PC-3 (cell line): ENCODE measurements at regions of chr11 and their contacts with region 1.

Region 1: DNA sequence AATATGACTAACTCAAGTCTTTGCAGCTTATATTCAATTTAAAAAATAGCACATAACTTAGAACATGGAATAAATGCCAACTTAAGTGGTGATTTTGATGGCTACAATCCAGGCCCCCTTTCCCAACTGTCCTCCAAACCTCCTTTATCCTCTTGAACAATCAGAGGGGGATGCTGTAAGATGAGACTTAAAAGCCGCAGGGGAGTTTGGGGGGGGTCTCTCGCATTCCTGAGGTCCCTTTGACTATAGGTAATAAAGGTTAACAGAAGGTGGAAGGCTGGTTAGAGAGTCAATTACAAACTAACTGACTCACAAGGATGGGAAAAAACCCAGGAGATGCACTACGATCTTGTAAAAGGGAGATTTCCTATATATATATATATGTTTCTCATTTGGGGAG is 101.8 kb downstream of the KIRREL3 start:
- DNase-seq: no peak
- ATAC-seq: no peak
- H3K4me3 ChIP-seq: no peak overlapping the region
- H3K27ac ChIP-seq: no peak overlapping the region
- H3K4me1 ChIP-seq: no peaks in the 10 kb centered on the region
- H3K27me3 ChIP-seq: peaks cover 25% of the 10 kb centered on the region
- CTCF ChIP-seq: no peak

Region 2: GRCh38 chr11:126886636-126887035 is 12.2 kb before region 1 on chr11:
- CTCF ChIA-PET with region 1: no interaction called
- POLR2A ChIA-PET with region 1: interaction called, 10 read pairs
- intact Hi-C with region 1: no loop called
- DNase-seq: no peak
- ATAC-seq: no peak
- H3K4me3 ChIP-seq: no peak overlapping the region
- H3K27ac ChIP-seq: no peak overlapping the region
- H3K4me1 ChIP-seq: no peaks in the 10 kb centered on the region
- H3K27me3 ChIP-seq: peaks cover 9% of the 10 kb centered on the region; the same call in 1 of the 2 replicates
- CTCF ChIP-seq: no peak